ENCODE measurements at regions of chr22 and their contacts with region 1.

Region 1: GRCh38 chr22:25582946-25583345 is 18.5 kb downstream of the GRK3 start:
- DNase-seq: no peak
- H3K4me3 ChIP-seq: no peak overlapping the region
- H3K27ac ChIP-seq: no peak overlapping the region
- H3K4me1 ChIP-seq: no peaks in the 10 kb centered on the region
- H3K27me3 ChIP-seq: no peaks in the 10 kb centered on the region
- CTCF ChIP-seq: no peak
- EP300 ChIP-seq: no peak
- POLR2A ChIP-seq: no peak

Region 2: DNA sequence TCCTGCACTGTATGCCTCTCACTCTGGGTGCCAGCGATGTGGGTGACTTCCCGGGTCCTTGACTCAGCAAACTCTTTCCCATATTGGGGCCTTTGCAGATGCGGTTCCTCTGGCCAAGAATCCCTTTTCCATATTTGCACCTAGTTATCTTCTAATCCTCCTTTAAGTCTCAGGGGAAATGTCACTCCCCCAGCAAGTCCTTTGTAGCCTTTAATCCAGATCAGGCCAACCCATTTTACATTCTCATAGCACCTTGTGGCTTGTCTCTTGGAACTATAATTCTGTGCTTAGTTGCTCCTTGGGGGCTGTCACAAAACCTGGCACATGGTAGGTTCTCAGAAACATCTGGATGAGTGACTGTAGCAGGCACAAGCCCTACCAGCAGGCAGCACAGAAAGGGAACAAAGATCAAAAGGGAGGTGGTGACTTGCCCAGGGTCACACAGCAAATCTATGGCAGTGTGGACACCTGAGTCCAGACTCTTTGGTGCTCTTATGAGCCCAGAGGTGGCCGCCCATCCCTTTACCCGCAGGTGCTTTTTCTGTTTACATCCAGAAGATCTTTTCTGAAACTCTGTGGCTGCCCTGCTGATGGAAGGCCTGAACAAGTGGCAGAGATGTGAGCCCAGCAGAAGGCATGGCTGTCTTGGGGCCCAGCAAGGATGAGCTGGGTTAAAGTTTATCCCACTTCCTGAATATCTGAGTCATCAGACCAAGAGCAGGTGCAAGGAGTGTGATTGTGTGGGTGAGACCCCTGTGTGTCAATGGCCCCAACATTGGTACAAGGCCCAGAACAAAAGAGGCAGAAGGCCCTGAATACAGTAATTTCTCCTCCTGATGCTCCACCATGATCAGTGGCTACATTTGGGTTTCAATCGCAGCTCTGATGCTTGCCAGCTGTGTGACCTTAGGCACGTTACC is 97.1 kb before region 1 on chr22:
- intact Hi-C with region 1: no loop called
- DNase-seq: no peak
- H3K4me3 ChIP-seq: no peak overlapping the region
- H3K27ac ChIP-seq: no peak overlapping the region
- H3K4me1 ChIP-seq: peaks cover 3% of the 10 kb centered on the region
- H3K27me3 ChIP-seq: no peaks in the 10 kb centered on the region
- CTCF ChIP-seq: no peak
- EP300 ChIP-seq: no peak
- POLR2A ChIP-seq: no peak

Region 3: DNA sequence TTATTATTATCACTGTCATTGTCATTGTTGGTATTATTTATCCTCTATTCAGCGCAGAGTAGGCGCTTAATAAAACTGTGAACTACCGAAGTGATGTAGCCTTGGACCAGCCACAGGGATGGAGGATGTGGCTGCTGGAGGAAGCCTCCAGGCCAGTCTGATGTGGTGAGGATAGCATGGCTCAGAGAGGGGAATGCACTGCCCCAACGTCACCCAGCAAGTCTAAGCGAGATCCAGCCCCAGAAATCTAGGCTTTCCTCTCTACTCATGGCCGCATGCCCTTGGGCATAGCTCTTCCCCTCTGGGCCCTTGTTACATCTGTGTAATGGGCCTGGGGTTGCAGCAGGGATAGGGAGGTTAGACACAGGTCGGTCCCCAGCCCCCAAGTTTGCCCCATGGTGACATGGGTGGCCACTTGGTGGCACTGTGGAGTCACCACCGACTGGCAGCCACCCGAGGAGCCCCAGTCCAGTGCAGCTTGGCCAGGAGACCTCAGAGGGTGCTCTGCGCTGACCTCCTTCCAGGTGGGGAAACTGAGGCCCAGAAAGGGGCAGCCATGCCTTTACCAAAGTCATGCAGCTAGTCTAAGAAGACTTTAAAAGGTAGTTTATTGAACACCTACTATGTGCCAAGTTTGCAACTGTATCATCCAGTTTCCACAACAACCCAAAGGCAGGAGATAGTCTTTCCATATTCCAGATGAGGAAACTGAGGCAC is 1822.9 kb after region 1 on chr22:
- intact Hi-C with region 1: loop called in 1 of 4 experiments (anchors 5 kb)
- DNase-seq: peak in 4 of 5 donors; percentile 39 to 63 (median 50)
- H3K4me3 ChIP-seq: no peak overlapping the region
- H3K27ac ChIP-seq: no peak overlapping the region
- H3K4me1 ChIP-seq: no peaks in the 10 kb centered on the region
- H3K27me3 ChIP-seq: no peaks in the 10 kb centered on the region
- CTCF ChIP-seq: peak in 2 of 3 donors; percentile 18 to 49
- EP300 ChIP-seq: no peak
- POLR2A ChIP-seq: no peak